Lower leg skin (tissue), 4 donors: ENCODE measurements at regions of chr15 and their contacts with region 1.

Region 1: GRCh38 chr15:97804955-97805354 is 155.5 kb upstream of the ARRDC4 start:
- DNase-seq: no peak
- H3K4me3 ChIP-seq: no peak overlapping the region
- CTCF ChIP-seq: no peak
- POLR2A ChIP-seq: no peak

Region 2: GRCh38 chr15:97672586-97672985 is 132.4 kb before region 1 on chr15:
- intact Hi-C with region 1: loop called (anchors 5 kb)
- DNase-seq: no peak
- H3K4me3 ChIP-seq: no peak overlapping the region
- CTCF ChIP-seq: no peak
- POLR2A ChIP-seq: no peak

Region 3: DNA sequence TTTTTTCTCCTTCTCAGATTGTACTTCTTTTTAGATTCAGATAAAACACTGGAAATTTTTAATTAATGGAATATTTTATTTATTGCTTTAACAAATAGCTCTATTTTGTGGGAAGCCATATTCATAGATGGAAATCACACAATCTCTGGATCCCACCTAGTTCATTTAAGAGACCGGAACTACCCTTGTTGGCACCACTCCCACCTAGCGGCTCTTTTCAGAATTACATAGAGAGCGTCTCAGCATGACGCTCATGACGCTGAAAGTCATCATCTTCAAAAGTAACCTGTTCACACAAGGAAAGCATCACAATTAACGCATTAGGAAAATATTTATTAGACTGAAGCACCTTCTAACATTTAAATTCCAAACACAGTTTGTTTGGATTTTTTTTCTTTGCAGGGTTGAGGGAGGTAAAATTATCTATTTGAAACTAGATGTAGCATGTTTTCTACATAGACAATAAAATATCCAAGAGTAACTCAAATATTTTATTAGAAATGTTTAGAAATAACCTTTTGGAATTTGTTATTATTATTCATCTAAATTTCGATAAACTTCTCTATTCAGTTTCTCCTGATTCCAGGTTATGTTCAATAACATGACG is 59.4 kb before region 1 on chr15:
- intact Hi-C with region 1: no loop called
- DNase-seq: no peak
- H3K4me3 ChIP-seq: no peak overlapping the region
- CTCF ChIP-seq: no peak
- POLR2A ChIP-seq: no peak